ENCODE measurements at regions of chr4 and their contacts with region 1.

Region 1: DNA sequence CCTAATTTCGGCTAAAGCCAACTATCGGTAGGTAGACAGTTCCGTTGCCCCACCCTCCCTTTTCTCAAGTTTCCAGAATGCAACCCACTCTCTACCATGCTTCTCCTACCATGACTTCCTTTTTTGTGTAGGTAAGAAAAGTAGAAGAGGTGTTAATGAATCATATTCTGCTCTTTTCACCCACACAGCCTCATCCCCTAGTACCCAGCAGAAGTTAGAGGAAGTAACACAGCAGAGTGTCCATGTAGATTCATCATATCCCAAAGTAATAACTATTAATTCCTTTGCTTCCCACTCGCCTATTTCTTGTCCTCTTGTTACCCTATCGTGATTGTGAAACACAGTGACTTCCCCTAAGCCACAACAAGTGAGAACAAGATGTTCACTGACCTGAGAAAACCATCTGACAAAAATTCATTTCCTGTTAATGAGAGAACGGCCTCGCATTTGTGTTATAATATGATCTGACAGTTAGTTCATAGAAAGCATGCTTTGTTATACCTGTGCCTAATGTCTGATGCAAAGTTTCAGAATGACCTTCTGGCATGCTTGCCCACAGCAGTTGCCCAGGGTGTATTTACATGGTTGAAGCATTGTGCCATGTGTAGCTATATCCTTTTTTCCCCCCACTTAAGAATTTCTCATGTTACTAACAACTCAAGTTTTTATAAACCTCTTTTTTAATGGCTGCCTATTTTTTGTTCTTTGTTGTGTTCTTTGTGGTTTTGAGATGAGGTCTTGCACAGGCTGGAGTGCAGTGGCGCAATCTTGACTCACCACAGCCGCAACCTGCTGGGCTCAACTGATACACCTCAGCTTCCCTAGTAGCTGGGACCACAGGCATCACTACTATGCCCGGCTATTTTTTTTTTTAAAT is 185.6 kb downstream of the RAP1GDS1 start:
- DNase-seq: peak in 34 of 35 experiments; percentile 25 to 74 (median 52)
- ATAC-seq: peak; percentile 87 to 94 (median 92)
- H3K4me3 ChIP-seq: peak overlapping the region in 1 of 2 donors; percentile 1
- H3K4me3 Mint-ChIP-seq: peak overlapping the region; percentile 46 to 60 (median 60)
- H3K27ac ChIP-seq: peak overlapping the region; percentile 57
- H3K27ac Mint-ChIP-seq: peak overlapping the region; percentile 86
- H3K4me1 ChIP-seq: peaks cover 14 to 40% of the 10 kb centered on the region in 2 experiments
- H3K4me1 Mint-ChIP-seq: peaks cover 39 to 42% (median 42%) of the 10 kb centered on the region in 3 donors
- H3K27me3 ChIP-seq: no peaks in the 10 kb centered on the region
- H3K27me3 Mint-ChIP-seq: no peaks in the 10 kb centered on the region

Region 2: DNA sequence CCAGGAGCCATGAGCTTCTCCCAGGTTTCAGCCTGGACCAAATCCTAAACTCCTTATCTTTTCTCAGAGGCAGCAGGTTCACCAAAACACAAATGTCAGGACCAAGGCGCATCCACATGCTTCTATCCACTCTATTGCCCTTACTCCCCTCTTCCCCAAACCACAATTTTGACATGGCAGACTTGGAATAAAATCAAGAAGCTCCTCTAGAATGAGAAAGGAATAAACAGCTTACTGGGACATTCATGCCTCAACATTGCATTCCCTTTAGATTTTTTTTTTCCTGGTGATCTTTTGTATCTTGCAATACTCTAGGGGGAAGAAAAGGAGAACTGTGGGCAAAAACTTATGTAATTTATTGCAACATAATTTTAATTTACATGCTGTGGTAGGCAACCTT is 92.6 kb after region 1 on chr4:
- CTCF ChIA-PET with region 1: no interaction called
- POLR2A ChIA-PET with region 1: interaction called in 1 of 2 experiments, 14 read pairs
- DNase-seq: no peak
- ATAC-seq: no peak
- H3K4me3 ChIP-seq: no peak overlapping the region
- H3K4me3 Mint-ChIP-seq: no peak overlapping the region
- H3K27ac ChIP-seq: no peak overlapping the region
- H3K27ac Mint-ChIP-seq: no peak overlapping the region
- H3K4me1 ChIP-seq: no peaks in the 10 kb centered on the region
- H3K4me1 Mint-ChIP-seq: peaks cover 4 to 10% (median 4%) of the 10 kb centered on the region in 3 donors
- H3K27me3 ChIP-seq: no peaks in the 10 kb centered on the region
- H3K27me3 Mint-ChIP-seq: no peaks in the 10 kb centered on the region

Region 3: GRCh38 chr4:98919996-98920395 is 473.3 kb after region 1 on chr4:
- CTCF ChIA-PET with region 1: no interaction called
- POLR2A ChIA-PET with region 1: interaction called in 1 of 2 experiments, 10 read pairs
- DNase-seq: no peak
- ATAC-seq: no peak
- H3K4me3 ChIP-seq: no peak overlapping the region
- H3K4me3 Mint-ChIP-seq: no peak overlapping the region
- H3K27ac ChIP-seq: no peak overlapping the region
- H3K27ac Mint-ChIP-seq: no peak overlapping the region
- H3K4me1 ChIP-seq: peaks cover 0 to 4% of the 10 kb centered on the region in 2 experiments
- H3K4me1 Mint-ChIP-seq: peaks cover 46 to 55% (median 53%) of the 10 kb centered on the region in 3 donors
- H3K27me3 ChIP-seq: no peaks in the 10 kb centered on the region
- H3K27me3 Mint-ChIP-seq: no peaks in the 10 kb centered on the region